Naive thymus-derived CD4-positive, alpha-beta T cell (primary cell): ENCODE measurements at regions of chr2 and their contacts with region 1.

Region 1: GRCh38 chr2:69724540-69725159 is 17.3 kb upstream of the ANXA4 start:
- DNase-seq: peak; percentile 59 to 85 (median 74)
- ATAC-seq: peak; percentile 92
- H3K4me3 ChIP-seq: no peak overlapping the region
- H3K4me3 Mint-ChIP-seq: peak overlapping the region in 9 of 10 donors; percentile 35 to 81 (median 57)
- H3K27ac ChIP-seq: no peak overlapping the region
- H3K27ac Mint-ChIP-seq: no peak overlapping the region
- H3K4me1 ChIP-seq: peaks cover 0 to 4% of the 10 kb centered on the region in 2 donors
- H3K4me1 Mint-ChIP-seq: peaks cover 0 to 8% (median 5%) of the 10 kb centered on the region in 7 donors
- H3K27me3 ChIP-seq: no peaks in the 10 kb centered on the region
- H3K27me3 Mint-ChIP-seq: peaks cover 0 to 7% (median 0%) of the 10 kb centered on the region in 5 donors

Region 2: DNA sequence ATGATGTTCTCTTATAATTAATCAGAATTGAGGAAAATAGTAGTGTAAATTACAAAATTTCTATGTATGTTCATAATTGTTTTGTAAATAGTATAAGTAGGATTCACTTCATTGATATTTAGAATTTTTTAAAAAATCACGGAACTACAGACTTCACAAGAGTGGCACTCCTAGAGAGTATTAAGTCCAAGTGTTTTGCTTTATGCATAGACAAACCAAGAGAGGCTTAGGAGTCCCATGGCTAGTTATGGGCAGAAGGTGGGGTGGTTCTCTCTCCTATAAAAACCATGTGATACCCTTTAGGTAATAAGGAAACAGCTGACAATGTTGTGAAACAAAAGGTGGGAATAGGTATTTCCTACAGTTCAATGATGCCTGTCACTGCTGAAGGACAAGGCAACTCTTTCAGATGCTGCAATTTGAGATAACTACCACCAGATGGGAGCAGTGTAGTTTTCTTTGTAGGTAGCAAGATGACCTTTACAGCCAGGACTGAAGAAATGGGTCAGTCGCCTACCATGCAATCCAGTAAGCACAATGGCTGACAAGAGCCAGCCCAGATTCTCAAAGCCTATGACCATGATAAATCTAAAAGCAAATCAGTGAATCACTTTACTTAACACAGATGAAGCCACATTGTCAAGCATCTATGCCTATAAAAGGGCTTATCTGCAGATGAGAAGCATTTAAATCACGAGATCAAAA is 165.1 kb before region 1 on chr2:
- CTCF ChIA-PET with region 1: interaction called, 20 read pairs
- POLR2A ChIA-PET with region 1: no interaction called
- intact Hi-C with region 1: no loop called
- DNase-seq: peak in 3 of 9 donors; percentile 22 to 32 (median 28)
- ATAC-seq: peak; percentile 75
- H3K4me3 ChIP-seq: no peak overlapping the region
- H3K4me3 Mint-ChIP-seq: peak overlapping the region in 9 of 10 donors; percentile 16 to 78 (median 48)
- H3K27ac ChIP-seq: no peak overlapping the region
- H3K27ac Mint-ChIP-seq: peak overlapping the region in 8 of 9 donors; percentile 10 to 83 (median 57)
- H3K4me1 ChIP-seq: peaks cover 8 to 62% of the 10 kb centered on the region in 2 donors
- H3K4me1 Mint-ChIP-seq: peaks cover 57 to 97% (median 93%) of the 10 kb centered on the region in 7 donors
- H3K27me3 ChIP-seq: no peaks in the 10 kb centered on the region
- H3K27me3 Mint-ChIP-seq: no peaks in the 10 kb centered on the region

Region 3: DNA sequence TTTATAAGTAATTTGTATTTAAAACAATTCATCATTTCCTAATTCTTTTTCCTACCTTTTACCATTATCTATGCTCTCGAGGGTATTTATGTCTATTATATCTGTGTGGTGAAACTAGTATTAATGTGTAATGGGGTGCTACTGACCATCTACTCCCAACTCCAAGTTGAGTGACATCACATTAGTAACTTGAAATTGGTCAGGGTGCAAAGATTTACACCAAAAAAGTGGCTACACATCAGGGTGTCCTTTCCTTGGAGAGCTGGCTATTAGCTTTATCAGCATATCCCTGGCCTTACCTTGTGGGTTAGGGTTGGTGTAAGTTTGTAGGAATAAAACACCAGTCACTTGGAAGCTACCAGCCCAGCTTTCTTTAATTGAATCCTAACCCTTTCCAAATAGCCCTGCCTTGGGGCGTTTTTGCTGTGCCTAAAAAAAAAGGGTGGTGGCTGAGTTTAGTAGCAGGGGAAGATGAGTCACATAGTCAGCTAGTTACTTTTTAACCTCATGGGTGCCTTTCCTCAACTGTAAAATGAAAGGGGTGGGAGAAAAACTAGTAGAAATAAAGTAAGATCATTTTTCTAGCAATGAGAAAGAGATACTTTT is 31.3 kb after region 1 on chr2:
- CTCF ChIA-PET with region 1: no interaction called
- POLR2A ChIA-PET with region 1: no interaction called
- intact Hi-C with region 1: no loop called
- DNase-seq: peak in 1 of 9 donors; percentile 31
- ATAC-seq: peak; percentile 51
- H3K4me3 ChIP-seq: no peak overlapping the region
- H3K4me3 Mint-ChIP-seq: peak overlapping the region in 1 of 10 donors; percentile 53
- H3K27ac ChIP-seq: no peak overlapping the region
- H3K27ac Mint-ChIP-seq: peak overlapping the region in 2 of 9 donors; percentile 36 to 71
- H3K4me1 ChIP-seq: no peaks in the 10 kb centered on the region
- H3K4me1 Mint-ChIP-seq: peaks cover 0 to 34% (median 0%) of the 10 kb centered on the region in 7 donors
- H3K27me3 ChIP-seq: no peaks in the 10 kb centered on the region
- H3K27me3 Mint-ChIP-seq: no peaks in the 10 kb centered on the region

Region 4: GRCh38 chr2:69798909-69799526 is 74.4 kb after region 1 on chr2:
- CTCF ChIA-PET with region 1: interaction called, 11 read pairs
- POLR2A ChIA-PET with region 1: no interaction called
- intact Hi-C with region 1: loop called in 1 of 2 experiments (anchors 5 kb)
- DNase-seq: peak in 1 of 9 donors; percentile 5
- ATAC-seq: peak; percentile 16
- H3K4me3 ChIP-seq: no peak overlapping the region
- H3K4me3 Mint-ChIP-seq: peak overlapping the region in 8 of 10 donors; percentile 3 to 70 (median 46)
- H3K27ac ChIP-seq: no peak overlapping the region
- H3K27ac Mint-ChIP-seq: peak overlapping the region in 4 of 9 donors; percentile 10 to 86 (median 22)
- H3K4me1 ChIP-seq: no peaks in the 10 kb centered on the region
- H3K4me1 Mint-ChIP-seq: peaks cover 6 to 40% (median 31%) of the 10 kb centered on the region in 7 donors
- H3K27me3 ChIP-seq: no peaks in the 10 kb centered on the region
- H3K27me3 Mint-ChIP-seq: peaks cover 0 to 5% (median 0%) of the 10 kb centered on the region in 5 donors

Region 5: GRCh38 chr2:69811591-69811990 is 86.9 kb after region 1 on chr2:
- CTCF ChIA-PET with region 1: interaction called, 163 read pairs
- POLR2A ChIA-PET with region 1: interaction called, 5 read pairs
- intact Hi-C with region 1: no loop called
- DNase-seq: no peak
- ATAC-seq: no peak
- H3K4me3 ChIP-seq: no peak overlapping the region
- H3K4me3 Mint-ChIP-seq: no peak overlapping the region
- H3K27ac ChIP-seq: no peak overlapping the region
- H3K27ac Mint-ChIP-seq: no peak overlapping the region
- H3K4me1 ChIP-seq: no peaks in the 10 kb centered on the region
- H3K4me1 Mint-ChIP-seq: peaks cover 0 to 9% (median 0%) of the 10 kb centered on the region in 7 donors
- H3K27me3 ChIP-seq: no peaks in the 10 kb centered on the region
- H3K27me3 Mint-ChIP-seq: no peaks in the 10 kb centered on the region

Region 6: GRCh38 chr2:69893684-69894551 is 169.3 kb after region 1 on chr2 and contains the start of gene SNRNP27:
- CTCF ChIA-PET with region 1: no interaction called
- POLR2A ChIA-PET with region 1: no interaction called
- intact Hi-C with region 1: loop called in 1 of 2 experiments (anchors 5 kb)
- DNase-seq: peak; percentile 62 to 84 (median 77)
- ATAC-seq: peak; percentile 90
- H3K4me3 ChIP-seq: peak within 1 kb of the TSS; percentile 67
- H3K4me3 Mint-ChIP-seq: peak within 1 kb of the TSS; percentile 90 to 100 (median 99)
- H3K27ac ChIP-seq: peak within 1 kb of the TSS; percentile 91
- H3K27ac Mint-ChIP-seq: peak within 1 kb of the TSS; percentile 93 to 100 (median 99)
- H3K4me1 ChIP-seq: peaks cover 12 to 17% of the 10 kb centered on the region in 2 donors
- H3K4me1 Mint-ChIP-seq: peaks cover 12 to 56% (median 43%) of the 10 kb centered on the region in 7 donors
- H3K27me3 ChIP-seq: no peaks in the 10 kb centered on the region
- H3K27me3 Mint-ChIP-seq: no peaks in the 10 kb centered on the region
- total RNA-seq, gene SNRNP27: 32.5 to 56.0 (median 51.5) TPM

Region 7: GRCh38 chr2:69973335-69973735 is 248.7 kb after region 1 on chr2:
- CTCF ChIA-PET with region 1: no interaction called
- POLR2A ChIA-PET with region 1: no interaction called
- intact Hi-C with region 1: no loop called
- DNase-seq: no peak
- ATAC-seq: no peak
- H3K4me3 ChIP-seq: no peak overlapping the region
- H3K4me3 Mint-ChIP-seq: no peak overlapping the region
- H3K27ac ChIP-seq: no peak overlapping the region
- H3K27ac Mint-ChIP-seq: no peak overlapping the region
- H3K4me1 ChIP-seq: no peaks in the 10 kb centered on the region
- H3K4me1 Mint-ChIP-seq: peaks cover 0 to 22% (median 16%) of the 10 kb centered on the region in 7 donors
- H3K27me3 ChIP-seq: no peaks in the 10 kb centered on the region
- H3K27me3 Mint-ChIP-seq: peaks cover 0 to 5% (median 0%) of the 10 kb centered on the region in 5 donors

Region 8: DNA sequence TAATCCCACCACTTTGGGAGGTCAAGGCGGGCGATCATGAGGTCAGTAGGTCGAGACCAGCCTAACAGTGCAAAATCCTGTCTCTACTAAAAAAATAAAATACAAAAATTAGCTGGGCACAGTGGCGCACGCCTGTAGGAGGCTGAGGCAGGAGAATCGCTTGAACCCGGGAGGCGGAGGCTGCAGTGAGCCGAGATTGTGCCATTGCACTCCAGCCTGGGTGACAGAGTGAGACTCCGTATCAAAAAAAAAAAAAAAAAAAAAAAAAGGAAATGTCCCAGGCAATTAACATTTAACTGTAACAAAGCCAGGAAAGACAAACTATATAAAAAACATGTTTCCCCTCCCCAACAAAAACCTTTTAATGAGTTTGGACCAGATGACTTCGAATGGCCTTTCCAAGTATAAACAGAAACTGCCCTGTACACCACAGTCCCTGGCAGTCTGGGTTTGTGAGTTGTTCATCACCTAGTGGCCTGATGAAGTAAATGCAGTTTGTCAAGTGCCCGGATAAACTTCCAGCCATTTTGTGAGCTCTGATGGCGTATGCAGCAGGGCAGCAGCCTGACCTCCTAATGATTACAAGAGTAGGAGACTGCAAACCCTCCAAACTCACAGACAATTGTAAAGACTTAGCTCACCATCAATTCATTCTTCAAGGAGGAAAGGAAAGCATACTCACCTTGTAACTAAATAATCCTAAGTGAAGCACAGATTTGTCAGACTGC is 346.1 kb after region 1 on chr2:
- CTCF ChIA-PET with region 1: interaction called, 4 read pairs
- POLR2A ChIA-PET with region 1: no interaction called
- intact Hi-C with region 1: loop called in 1 of 2 experiments (anchors 5 kb)
- DNase-seq: peak in 8 of 9 donors; percentile 49 to 80 (median 70)
- ATAC-seq: peak; percentile 85
- H3K4me3 ChIP-seq: peak overlapping the region; percentile 48
- H3K4me3 Mint-ChIP-seq: peak overlapping the region; percentile 56 to 91 (median 80)
- H3K27ac ChIP-seq: peak overlapping the region; percentile 71
- H3K27ac Mint-ChIP-seq: peak overlapping the region; percentile 89 to 99 (median 95)
- H3K4me1 ChIP-seq: peaks cover 35 to 36% of the 10 kb centered on the region in 2 donors
- H3K4me1 Mint-ChIP-seq: peaks cover 19 to 72% (median 63%) of the 10 kb centered on the region in 7 donors
- H3K27me3 ChIP-seq: no peaks in the 10 kb centered on the region
- H3K27me3 Mint-ChIP-seq: no peaks in the 10 kb centered on the region

Region 9: GRCh38 chr2:70647873-70648481 is 923.3 kb after region 1 on chr2:
- CTCF ChIA-PET with region 1: no interaction called
- POLR2A ChIA-PET with region 1: no interaction called
- intact Hi-C with region 1: loop called in 1 of 2 experiments (anchors 2 kb)
- DNase-seq: peak; percentile 55 to 81 (median 75)
- ATAC-seq: peak; percentile 85
- H3K4me3 ChIP-seq: no peak overlapping the region
- H3K4me3 Mint-ChIP-seq: no peak overlapping the region
- H3K27ac ChIP-seq: no peak overlapping the region
- H3K27ac Mint-ChIP-seq: peak overlapping the region in 1 of 9 donors; percentile 13
- H3K4me1 ChIP-seq: no peaks in the 10 kb centered on the region
- H3K4me1 Mint-ChIP-seq: no peaks in the 10 kb centered on the region
- H3K27me3 ChIP-seq: no peaks in the 10 kb centered on the region
- H3K27me3 Mint-ChIP-seq: peaks cover 0 to 30% (median 4%) of the 10 kb centered on the region in 5 donors